ENCODE measurements at regions of chr12 and their contacts with region 1.

Region 1: DNA sequence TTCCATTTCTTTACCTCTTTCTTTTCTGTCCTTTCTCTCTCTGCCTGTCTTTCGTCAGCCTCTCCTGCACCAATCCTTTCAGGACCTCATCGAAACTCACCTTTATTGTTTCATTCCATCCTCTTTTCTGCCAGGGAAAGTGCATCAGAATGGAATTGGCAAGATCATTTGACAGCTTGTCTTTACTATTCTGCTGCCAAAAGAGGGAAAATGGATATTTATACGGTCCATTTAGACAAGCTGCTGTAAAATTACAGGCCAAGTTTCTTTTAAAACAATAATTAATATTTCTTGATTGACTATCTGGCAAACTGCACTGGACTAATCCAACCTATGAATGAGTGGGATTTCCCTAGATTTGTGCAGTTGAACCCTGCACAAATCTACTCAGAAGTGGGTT is 7.6 kb upstream of the SRGAP1 start:
- DNase-seq: no peak
- ATAC-seq: no peak
- H3K4me3 ChIP-seq: no peak overlapping the region
- H3K4me3 Mint-ChIP-seq: no peak overlapping the region
- H3K27ac ChIP-seq: no peak overlapping the region
- H3K27ac Mint-ChIP-seq: no peak overlapping the region
- H3K4me1 ChIP-seq: no peaks in the 10 kb centered on the region
- H3K4me1 Mint-ChIP-seq: no peaks in the 10 kb centered on the region
- H3K27me3 ChIP-seq: peaks cover 0 to 8% of the 10 kb centered on the region in 2 experiments
- H3K27me3 Mint-ChIP-seq: peaks cover 3 to 10% of the 10 kb centered on the region in 2 donors

Region 2: DNA sequence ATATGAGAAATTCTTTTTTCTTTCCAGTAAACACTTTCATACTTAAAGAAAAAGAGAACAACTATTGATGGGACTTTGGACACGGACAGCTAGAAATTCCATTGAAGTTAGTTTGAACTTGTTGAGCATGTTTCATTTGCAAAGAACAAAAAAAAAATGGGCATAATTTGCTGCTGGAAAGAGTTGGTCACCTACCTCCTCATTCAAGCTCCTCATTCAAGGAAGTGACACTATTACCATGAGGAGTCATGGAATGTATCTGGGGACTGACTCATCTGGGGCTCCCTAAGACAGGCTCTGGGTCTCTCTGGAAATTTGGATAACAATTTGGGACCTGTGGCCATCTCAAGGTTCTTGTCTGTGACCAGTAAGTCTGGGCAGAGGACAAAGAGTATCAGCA is 334.8 kb after region 1 on chr12:
- CTCF ChIA-PET with region 1: interaction called in 1 of 2 experiments, 10 read pairs
- POLR2A ChIA-PET with region 1: no interaction called
- DNase-seq: no peak
- ATAC-seq: no peak
- H3K4me3 ChIP-seq: no peak overlapping the region
- H3K4me3 Mint-ChIP-seq: no peak overlapping the region
- H3K27ac ChIP-seq: no peak overlapping the region
- H3K27ac Mint-ChIP-seq: no peak overlapping the region
- H3K4me1 ChIP-seq: no peaks in the 10 kb centered on the region
- H3K4me1 Mint-ChIP-seq: no peaks in the 10 kb centered on the region
- H3K27me3 ChIP-seq: no peaks in the 10 kb centered on the region
- H3K27me3 Mint-ChIP-seq: no peaks in the 10 kb centered on the region

Measured in T-cell (primary cell).